ENCODE measurements at regions of chr5 and their contacts with region 1.

Region 1: GRCh38 chr5:38208782-38209378 is 49.5 kb upstream of the EGFLAM start:
- DNase-seq: peak; percentile 44
- H3K4me3 Mint-ChIP-seq: no peak overlapping the region
- H3K27ac Mint-ChIP-seq: no peak overlapping the region
- H3K4me1 Mint-ChIP-seq: no peaks in the 10 kb centered on the region
- H3K27me3 Mint-ChIP-seq: peaks cover 28% of the 10 kb centered on the region

Region 2: GRCh38 chr5:38404667-38405276 is 195.9 kb after region 1 on chr5:
- CTCF ChIA-PET with region 1: no interaction called
- intact Hi-C with region 1: loop called (anchors 1 kb)
- DNase-seq: peak; percentile 44
- H3K4me3 Mint-ChIP-seq: no peak overlapping the region
- H3K27ac Mint-ChIP-seq: no peak overlapping the region
- H3K4me1 Mint-ChIP-seq: peaks cover 2% of the 10 kb centered on the region
- H3K27me3 Mint-ChIP-seq: peaks cover 23% of the 10 kb centered on the region

Region 3: DNA sequence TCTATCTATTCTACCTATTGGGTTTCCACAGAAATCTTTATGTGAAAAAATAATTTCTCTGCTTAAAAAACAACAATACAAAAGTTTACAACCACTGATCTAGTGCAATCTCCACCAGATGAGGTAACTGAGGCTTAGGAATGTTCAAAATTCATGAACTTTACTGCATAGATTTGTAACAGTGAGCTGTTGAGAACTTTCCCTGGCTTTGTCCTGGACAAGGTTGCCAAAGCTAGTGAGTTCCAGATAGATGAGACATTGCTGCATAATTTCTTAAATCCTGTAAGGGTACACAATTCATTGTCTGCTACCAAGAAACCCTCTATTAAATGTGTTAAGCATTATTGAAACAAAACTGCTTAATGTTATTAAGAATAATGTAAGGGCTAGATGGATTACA is 739.6 kb after region 1 on chr5:
- CTCF ChIA-PET with region 1: no interaction called
- intact Hi-C with region 1: no loop called
- DNase-seq: no peak
- H3K4me3 Mint-ChIP-seq: no peak overlapping the region
- H3K27ac Mint-ChIP-seq: no peak overlapping the region
- H3K4me1 Mint-ChIP-seq: no peaks in the 10 kb centered on the region
- H3K27me3 Mint-ChIP-seq: no peaks in the 10 kb centered on the region